PC-9 (cell line): ENCODE measurements at regions of chr17 and their contacts with region 1.

Region 1: GRCh38 chr17:44199553-44200477 is at the start of gene ATXN7L3:
- DNase-seq: peak; percentile 90 to 97
- H3K4me3 ChIP-seq: peak within 1 kb of the TSS; percentile 92
- H3K27ac ChIP-seq: peak within 1 kb of the TSS; percentile 77
- H3K4me1 ChIP-seq: peaks cover 35% of the 10 kb centered on the region
- H3K27me3 ChIP-seq: no peaks in the 10 kb centered on the region
- CTCF ChIP-seq: no peak
- total RNA-seq, gene ATXN7L3: 59.3 and 87.4 TPM in 2 replicates

Region 2: DNA sequence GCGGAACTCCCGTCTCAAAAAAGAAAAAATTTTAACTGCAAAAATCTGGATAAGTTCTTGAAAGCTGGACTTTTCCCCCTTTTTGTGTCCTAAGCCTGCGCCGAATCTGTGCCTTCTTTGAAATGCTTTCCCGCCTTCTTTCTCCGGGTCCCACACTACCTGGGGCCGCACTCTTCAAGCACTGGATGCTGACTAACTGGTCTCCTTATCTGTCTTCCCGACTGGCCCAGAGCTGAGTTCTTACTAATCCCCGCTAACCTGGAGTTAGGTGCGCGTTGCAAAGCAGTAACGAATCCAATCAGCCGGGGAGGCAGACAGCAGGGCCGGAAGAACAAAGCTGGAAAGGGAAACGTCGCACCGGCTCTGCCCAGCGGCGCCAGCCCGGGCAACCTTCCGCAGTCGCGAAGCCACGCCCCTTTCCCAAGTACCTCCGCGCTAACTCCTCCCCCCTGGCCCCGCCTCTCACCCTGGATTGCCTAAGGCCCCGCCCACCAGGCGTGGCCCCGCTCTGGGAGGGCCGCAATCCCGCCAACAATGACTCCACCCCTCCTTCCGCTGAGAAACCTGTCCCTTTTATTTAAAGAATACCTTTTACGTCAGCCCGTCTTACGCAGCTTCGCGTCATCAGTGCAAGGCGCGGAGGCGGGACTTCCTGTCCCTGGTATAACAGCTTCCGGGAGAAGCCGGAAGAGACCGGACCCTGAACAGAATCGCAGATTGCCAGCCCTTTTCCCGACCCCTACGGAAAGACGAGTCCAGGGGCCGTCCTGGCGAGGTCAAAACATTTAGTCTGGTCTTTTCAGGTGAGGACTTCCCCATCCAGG is 13.3 kb before region 1 on chr17 and contains the start of gene TMUB2:
- CTCF ChIA-PET with region 1: interaction called, 3 read pairs
- POLR2A ChIA-PET with region 1: interaction called, 15 read pairs
- intact Hi-C with region 1: loop called (anchors 1 kb)
- DNase-seq: peak; percentile 95 to 99
- H3K4me3 ChIP-seq: peak within 1 kb of the TSS; percentile 94
- H3K27ac ChIP-seq: peak within 1 kb of the TSS; percentile 71
- H3K4me1 ChIP-seq: peaks cover 16% of the 10 kb centered on the region; the same call in 1 of the 2 replicates
- H3K27me3 ChIP-seq: no peaks in the 10 kb centered on the region
- CTCF ChIP-seq: no peak
- total RNA-seq, gene TMUB2: 39.2 and 45.5 TPM in 2 replicates

Region 3: DNA sequence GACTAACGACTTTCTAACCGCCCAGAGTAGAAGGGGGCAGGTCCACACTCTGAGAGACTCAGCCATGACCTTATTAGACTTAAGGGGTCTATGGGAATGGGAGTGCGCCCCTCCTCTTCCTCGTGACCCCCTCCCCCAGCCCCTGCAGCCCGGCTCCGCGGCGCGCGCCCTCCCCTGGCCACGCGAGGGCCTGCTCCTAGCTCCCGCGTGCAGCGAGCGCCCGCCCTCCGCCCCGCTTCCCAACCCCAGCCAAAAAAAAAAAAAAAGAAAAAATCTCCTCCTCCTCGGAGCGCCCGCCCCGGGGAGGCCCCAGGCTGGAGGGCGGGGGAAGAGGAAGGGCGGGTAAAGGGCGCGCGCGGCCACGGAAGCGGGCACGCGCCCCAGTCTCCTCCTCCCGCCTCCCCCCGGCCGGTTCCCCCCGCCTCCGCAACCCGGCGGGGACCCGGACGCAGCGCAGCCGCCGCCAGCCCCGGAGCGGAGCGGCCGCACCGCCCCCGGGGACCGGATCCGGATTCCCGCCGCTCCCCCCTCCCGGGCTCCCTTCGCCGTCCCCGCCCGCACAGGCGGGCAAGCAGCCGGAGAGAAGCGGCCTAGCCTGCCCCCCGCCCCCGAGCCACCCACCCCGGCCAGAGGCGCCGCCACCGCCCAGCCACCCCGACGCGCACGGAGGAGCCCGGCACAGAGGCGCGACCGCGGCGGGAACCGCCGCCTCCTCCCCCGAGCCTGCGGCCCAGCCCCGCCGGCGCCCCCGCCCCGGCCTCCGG is 18.7 kb after region 1 on chr17:
- CTCF ChIA-PET with region 1: interaction called, 10 read pairs
- POLR2A ChIA-PET with region 1: no interaction called
- intact Hi-C with region 1: loop called (anchors 1 kb)
- DNase-seq: peak; percentile 74 to 87
- H3K4me3 ChIP-seq: peak overlapping the region; percentile 97
- H3K27ac ChIP-seq: 0 out of 2 replicates have a peak overlapping the region, but pooled peaks have one; percentile 3
- H3K4me1 ChIP-seq: peaks cover 22% of the 10 kb centered on the region
- H3K27me3 ChIP-seq: no peaks in the 10 kb centered on the region
- CTCF ChIP-seq: peak; percentile 62

Region 4: GRCh38 chr17:44324571-44325275 is 124.9 kb after region 1 on chr17 and contains the start of gene SLC25A39:
- CTCF ChIA-PET with region 1: no interaction called
- POLR2A ChIA-PET with region 1: interaction called, 6 read pairs
- intact Hi-C with region 1: loop called (anchors 1 kb)
- DNase-seq: peak; percentile 75 to 96
- H3K4me3 ChIP-seq: peak within 1 kb of the TSS; percentile 88
- H3K27ac ChIP-seq: peak within 1 kb of the TSS; percentile 57
- H3K4me1 ChIP-seq: 0 out of 2 replicates have a peak, but pooled peaks cover 4% of the 10 kb centered on the region
- H3K27me3 ChIP-seq: no peaks in the 10 kb centered on the region
- CTCF ChIP-seq: no peak
- total RNA-seq, gene SLC25A39: 164 and 204 TPM in 2 replicates